ENCODE measurements at regions of chr12 and their contacts with region 1.

Region 1: DNA sequence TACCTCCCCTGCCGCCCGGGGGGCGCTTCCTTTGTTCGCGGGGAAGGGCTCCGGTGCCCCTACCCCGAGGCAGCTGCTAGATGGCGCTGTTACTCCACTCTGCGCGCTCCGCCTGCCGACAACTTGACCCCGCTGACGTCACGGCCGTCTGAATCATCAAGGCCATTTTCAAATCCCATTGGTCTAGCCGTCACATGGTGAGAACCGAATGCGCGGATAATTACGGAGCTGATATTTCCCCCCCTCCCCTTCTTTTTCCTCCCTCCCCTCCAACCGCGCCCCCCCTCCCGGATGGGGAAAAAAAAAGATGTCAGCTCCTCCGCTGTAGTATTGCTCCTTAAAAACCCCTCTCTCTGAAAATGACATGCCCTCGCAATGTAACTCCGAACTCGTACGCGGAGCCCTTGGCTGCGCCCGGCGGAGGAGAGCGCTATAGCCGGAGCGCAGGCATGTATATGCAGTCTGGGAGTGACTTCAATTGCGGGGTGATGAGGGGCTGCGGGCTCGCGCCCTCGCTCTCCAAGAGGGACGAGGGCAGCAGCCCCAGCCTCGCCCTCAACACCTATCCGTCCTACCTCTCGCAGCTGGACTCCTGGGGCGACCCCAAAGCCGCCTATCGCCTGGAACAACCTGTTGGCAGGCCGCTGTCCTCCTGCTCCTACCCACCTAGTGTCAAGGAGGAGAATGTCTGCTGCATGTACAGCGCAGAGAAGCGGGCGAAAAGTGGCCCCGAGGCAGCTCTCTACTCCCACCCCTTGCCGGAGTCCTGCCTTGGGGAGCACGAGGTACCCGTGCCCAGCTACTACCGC is at the start of gene HOXC10:
- DNase-seq: peak; percentile 95
- H3K4me3 ChIP-seq: peak within 1 kb of the TSS; percentile 30
- H3K27ac ChIP-seq: no peak within 1 kb of the TSS
- H3K4me1 ChIP-seq: peaks cover 49% of the 10 kb centered on the region
- CTCF ChIP-seq: peak; percentile 76
- total RNA-seq, gene HOXC10: 0.28 TPM in 1 of 2 replicates, not detected in the other

Region 2: GRCh38 chr12:53701518-53702260 is 283.4 kb before region 1 on chr12:
- CTCF ChIA-PET with region 1: no interaction called
- POLR2A ChIA-PET with region 1: no interaction called
- intact Hi-C with region 1: loop called (anchors 10 kb)
- DNase-seq: peak; percentile 71
- H3K4me3 ChIP-seq: no peak overlapping the region
- H3K27ac ChIP-seq: no peak overlapping the region
- H3K4me1 ChIP-seq: no peaks in the 10 kb centered on the region
- CTCF ChIP-seq: peak; percentile 92

Region 3: GRCh38 chr12:53766881-53767280 is 218.2 kb before region 1 on chr12:
- CTCF ChIA-PET with region 1: no interaction called
- POLR2A ChIA-PET with region 1: interaction called, 3 read pairs
- intact Hi-C with region 1: loop called (anchors 2 kb)
- DNase-seq: no peak
- H3K4me3 ChIP-seq: no peak overlapping the region
- H3K27ac ChIP-seq: no peak overlapping the region
- H3K4me1 ChIP-seq: no peaks in the 10 kb centered on the region
- CTCF ChIP-seq: no peak

Region 4: GRCh38 chr12:53791735-53792326 is 193.3 kb before region 1 on chr12:
- CTCF ChIA-PET with region 1: interaction called, 3 read pairs
- POLR2A ChIA-PET with region 1: no interaction called
- intact Hi-C with region 1: loop called (anchors 10 kb)
- DNase-seq: peak; percentile 38
- H3K4me3 ChIP-seq: no peak overlapping the region
- H3K27ac ChIP-seq: no peak overlapping the region
- H3K4me1 ChIP-seq: no peaks in the 10 kb centered on the region
- CTCF ChIP-seq: peak; percentile 89